ENCODE measurements at regions of chr1 and their contacts with region 1.

Region 1: GRCh38 chr1:184242507-184242943 is 144.3 kb upstream of the C1orf21 start:
- DNase-seq: peak; percentile 22 to 35 (median 25)
- H3K4me3 ChIP-seq: no peak overlapping the region
- H3K27ac ChIP-seq: no peak overlapping the region
- H3K4me1 ChIP-seq: peaks cover 0 to 8% (median 0%) of the 10 kb centered on the region in 4 experiments
- H3K27me3 ChIP-seq: no peaks in the 10 kb centered on the region

Region 2: DNA sequence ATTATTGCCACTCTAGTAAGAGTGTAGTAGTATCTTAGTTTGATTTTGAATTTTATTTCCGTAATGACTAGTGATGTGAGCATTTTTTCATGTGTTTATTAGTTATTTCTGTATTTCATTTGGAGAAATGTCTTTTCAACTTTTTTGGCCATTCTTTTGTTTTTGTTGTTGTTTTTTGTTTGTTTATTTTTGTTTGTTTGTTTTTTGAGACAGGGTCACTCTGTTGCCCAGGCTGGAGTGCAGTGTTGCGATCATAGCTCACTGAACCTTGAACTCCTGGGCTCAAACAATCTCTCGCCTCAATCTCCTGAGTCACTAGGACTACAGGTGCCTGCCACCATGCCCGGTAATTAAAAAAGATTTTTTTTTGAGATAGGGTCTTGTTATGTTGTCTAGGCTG is 115.0 kb before region 1 on chr1:
- CTCF ChIA-PET with region 1: no interaction called
- POLR2A ChIA-PET with region 1: no interaction called
- DNase-seq: no peak
- H3K4me3 ChIP-seq: no peak overlapping the region
- H3K27ac ChIP-seq: no peak overlapping the region
- H3K4me1 ChIP-seq: no peaks in the 10 kb centered on the region
- H3K27me3 ChIP-seq: no peaks in the 10 kb centered on the region

Region 3: DNA sequence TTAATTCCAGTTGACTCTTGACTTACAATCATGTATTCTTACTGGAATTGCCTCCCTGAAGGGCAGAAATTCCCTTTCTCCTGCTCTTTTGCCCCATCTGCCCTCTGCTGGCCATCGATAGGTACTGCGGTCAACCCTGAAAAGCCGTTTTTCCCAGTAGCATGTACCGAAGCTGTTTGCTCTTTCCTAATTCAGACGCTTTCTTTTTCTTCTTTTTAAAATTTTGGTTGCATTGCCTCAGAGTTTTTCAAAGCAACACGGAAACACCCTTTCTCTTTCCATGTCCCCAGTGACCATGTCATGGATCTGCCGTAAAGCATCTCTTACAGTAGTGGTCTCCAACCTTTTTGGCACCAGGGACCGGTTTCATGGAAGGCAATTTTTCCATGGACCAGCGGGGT is 19.9 kb before region 1 on chr1:
- CTCF ChIA-PET with region 1: interaction called, 10 read pairs
- POLR2A ChIA-PET with region 1: no interaction called
- DNase-seq: peak; percentile 33 to 52 (median 36)
- H3K4me3 ChIP-seq: peak overlapping the region in 2 of 7 experiments; percentile 13 to 65
- H3K27ac ChIP-seq: no peak overlapping the region
- H3K4me1 ChIP-seq: no peaks in the 10 kb centered on the region
- H3K27me3 ChIP-seq: no peaks in the 10 kb centered on the region

Region 4: GRCh38 chr1:184563308-184563707 is 320.8 kb after region 1 on chr1:
- CTCF ChIA-PET with region 1: interaction called, 11 read pairs
- POLR2A ChIA-PET with region 1: no interaction called
- DNase-seq: peak; percentile 36 to 69 (median 60)
- H3K4me3 ChIP-seq: no peak overlapping the region
- H3K27ac ChIP-seq: no peak overlapping the region
- H3K4me1 ChIP-seq: peaks cover 0 to 38% (median 19%) of the 10 kb centered on the region in 4 experiments
- H3K27me3 ChIP-seq: no peaks in the 10 kb centered on the region

Measured in common myeloid progenitor, CD34-positive (primary cell).